Activated CD4-positive, alpha-beta memory T cell treated with anti-CD3 and anti-CD28 coated beads, Interleukin-2, amount 10 ng/mL, durations not matched to agents 7 days and 5 days (primary cell): ENCODE measurements at regions of chr21 and their contacts with region 1.

Region 1: GRCh38 chr21:41926117-41926806 is 27.6 kb downstream of the C2CD2 start:
- DNase-seq: peak; percentile 39
- H3K4me3 Mint-ChIP-seq: peak overlapping the region; percentile 87
- H3K27ac Mint-ChIP-seq: peak overlapping the region; percentile 86
- H3K4me1 Mint-ChIP-seq: peaks cover 52% of the 10 kb centered on the region
- H3K27me3 Mint-ChIP-seq: no peaks in the 10 kb centered on the region

Region 2: GRCh38 chr21:41865002-41865777 is 61.1 kb before region 1 on chr21:
- CTCF ChIA-PET with region 1: no interaction called
- POLR2A ChIA-PET with region 1: no interaction called
- DNase-seq: no peak
- H3K4me3 Mint-ChIP-seq: no peak overlapping the region
- H3K27ac Mint-ChIP-seq: peak overlapping the region; percentile 34
- H3K4me1 Mint-ChIP-seq: peaks cover 26% of the 10 kb centered on the region
- H3K27me3 Mint-ChIP-seq: no peaks in the 10 kb centered on the region

Region 3: GRCh38 chr21:42002421-42002958 is 76.2 kb after region 1 on chr21:
- CTCF ChIA-PET with region 1: no interaction called
- POLR2A ChIA-PET with region 1: interaction called, 11 read pairs
- DNase-seq: peak; percentile 73
- H3K4me3 Mint-ChIP-seq: no peak overlapping the region
- H3K27ac Mint-ChIP-seq: peak overlapping the region; percentile 8
- H3K4me1 Mint-ChIP-seq: peaks cover 32% of the 10 kb centered on the region
- H3K27me3 Mint-ChIP-seq: peaks cover 12% of the 10 kb centered on the region

Region 4: GRCh38 chr21:42089093-42089631 is 162.9 kb after region 1 on chr21:
- CTCF ChIA-PET with region 1: no interaction called
- POLR2A ChIA-PET with region 1: no interaction called
- DNase-seq: no peak
- H3K4me3 Mint-ChIP-seq: no peak overlapping the region
- H3K27ac Mint-ChIP-seq: no peak overlapping the region
- H3K4me1 Mint-ChIP-seq: peaks cover 5% of the 10 kb centered on the region
- H3K27me3 Mint-ChIP-seq: peaks cover 5% of the 10 kb centered on the region